Prostate gland (tissue), 2 donors: ENCODE measurements at regions of chr5 and their contacts with region 1.

Region 1: DNA sequence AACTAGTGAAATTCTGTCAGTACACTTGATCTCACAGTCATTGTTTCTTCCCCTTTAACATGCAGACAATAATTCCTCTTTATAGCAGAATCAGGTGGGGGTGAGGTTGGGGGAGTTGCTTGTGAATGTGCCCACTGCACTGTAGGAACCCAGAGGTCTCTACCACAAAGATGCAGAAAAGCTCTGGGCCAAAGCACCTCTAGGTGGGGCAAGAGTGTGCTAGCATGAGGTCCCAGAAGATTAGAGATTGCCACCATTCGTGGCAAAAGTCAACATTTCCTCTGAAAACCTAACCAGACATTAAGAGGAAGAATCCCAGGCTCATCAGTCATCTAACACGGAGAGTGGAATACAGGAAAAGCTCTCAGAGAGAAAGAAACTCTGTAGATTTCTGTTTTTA is 74.5 kb downstream of the PTCD2 start:
- DNase-seq: no peak
- H3K4me3 ChIP-seq: no peak overlapping the region
- H3K27ac ChIP-seq: no peak overlapping the region
- H3K4me1 ChIP-seq: no peaks in the 10 kb centered on the region
- H3K27me3 ChIP-seq: no peaks in the 10 kb centered on the region
- CTCF ChIP-seq: peak in 1 of 4 experiments; percentile 13
- POLR2A ChIP-seq: no peak

Region 2: GRCh38 chr5:72355706-72356299 is 38.9 kb before region 1 on chr5:
- intact Hi-C with region 1: no loop called
- DNase-seq: no peak
- H3K4me3 ChIP-seq: no peak overlapping the region
- H3K27ac ChIP-seq: no peak overlapping the region
- H3K4me1 ChIP-seq: no peaks in the 10 kb centered on the region
- H3K27me3 ChIP-seq: no peaks in the 10 kb centered on the region
- CTCF ChIP-seq: peak in 2 of 4 experiments; percentile 25 to 37
- POLR2A ChIP-seq: no peak

Region 3: DNA sequence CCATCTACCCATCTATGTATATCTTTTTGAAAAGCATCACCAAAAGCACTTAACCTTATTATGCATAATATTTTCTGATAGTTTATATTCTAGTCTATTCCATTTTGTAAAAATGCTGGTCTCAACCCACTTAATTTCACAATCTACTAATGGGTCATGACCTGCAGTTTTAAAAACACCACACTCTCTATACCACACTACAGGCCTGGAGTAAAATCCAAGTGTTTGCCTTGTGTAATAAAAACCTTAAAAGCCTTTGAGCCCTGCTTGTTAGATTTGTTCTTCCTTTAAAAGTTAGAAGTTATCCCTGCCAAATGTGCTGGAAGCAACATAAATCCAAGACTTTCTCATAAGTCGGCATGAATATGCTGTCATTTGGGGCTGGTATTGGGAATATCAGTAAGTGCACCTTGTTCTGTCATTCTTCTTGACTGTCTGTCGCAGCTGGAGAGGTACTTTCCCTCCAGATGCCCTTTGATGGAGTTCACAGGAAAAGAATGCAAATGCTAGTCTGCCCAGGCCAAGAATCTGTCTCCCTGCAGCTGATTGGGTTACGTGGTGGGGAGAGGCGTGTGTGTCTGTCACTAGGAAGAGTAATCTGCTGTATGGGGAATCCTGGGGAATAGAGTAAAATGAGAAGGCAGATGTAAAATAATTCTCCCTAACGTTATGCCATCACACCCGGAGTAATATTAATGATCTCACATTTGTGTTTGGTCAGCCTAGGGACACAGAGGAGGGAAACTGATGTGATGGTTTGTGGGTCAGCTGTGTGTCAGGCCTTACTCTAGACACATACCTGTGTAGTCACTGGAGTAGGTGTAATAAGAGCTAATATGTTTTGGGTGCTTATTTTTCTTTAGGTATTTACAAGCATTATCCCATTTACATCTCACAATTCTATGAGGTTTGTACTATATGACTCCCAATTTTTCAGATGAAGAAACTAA is 33.1 kb after region 1 on chr5:
- intact Hi-C with region 1: loop called (anchors 5 kb)
- DNase-seq: no peak
- H3K4me3 ChIP-seq: no peak overlapping the region
- H3K27ac ChIP-seq: peak overlapping the region in 1 of 2 donors; percentile 31
- H3K4me1 ChIP-seq: no peaks in the 10 kb centered on the region
- H3K27me3 ChIP-seq: no peaks in the 10 kb centered on the region
- CTCF ChIP-seq: no peak
- POLR2A ChIP-seq: no peak